ENCODE measurements at regions of chr12 and their contacts with region 1.

Region 1: GRCh38 chr12:92570056-92570753 is 132.6 kb upstream of the PLEKHG7 start:
- DNase-seq: peak; percentile 79
- H3K4me3 ChIP-seq: no peak overlapping the region
- H3K27ac ChIP-seq: no peak overlapping the region
- H3K4me1 ChIP-seq: no peaks in the 10 kb centered on the region
- H3K27me3 ChIP-seq: no peaks in the 10 kb centered on the region
- CTCF ChIP-seq: peak; percentile 69 to 87 (median 86)
- POLR2A ChIP-seq: no peak

Region 2: DNA sequence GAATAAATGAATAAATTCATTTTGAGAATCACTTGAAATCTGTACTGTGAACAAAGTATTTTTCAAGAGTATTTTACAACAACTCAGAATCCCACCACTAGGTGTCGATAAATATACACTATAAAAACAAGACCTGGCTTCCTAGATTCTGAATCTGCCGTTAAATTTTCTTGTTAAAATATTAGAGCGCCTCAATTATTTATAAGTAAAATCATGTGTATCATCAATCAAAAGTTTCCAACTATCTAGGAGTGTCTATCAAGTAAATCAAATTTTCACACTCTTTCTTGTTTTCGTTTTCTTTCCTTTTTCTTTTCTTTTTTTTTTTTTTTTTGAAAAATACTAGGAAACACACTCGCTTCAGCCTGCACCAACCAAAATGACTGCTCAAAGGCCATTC is 1208.3 kb before region 1 on chr12:
- intact Hi-C with region 1: loop called (anchors 5 kb)
- DNase-seq: no peak
- H3K4me3 ChIP-seq: no peak overlapping the region
- H3K27ac ChIP-seq: no peak overlapping the region
- H3K4me1 ChIP-seq: no peaks in the 10 kb centered on the region
- H3K27me3 ChIP-seq: no peaks in the 10 kb centered on the region
- CTCF ChIP-seq: peak; percentile 68 to 84 (median 78)
- POLR2A ChIP-seq: no peak

Region 3: GRCh38 chr12:91382081-91382543 is 1188.1 kb before region 1 on chr12:
- intact Hi-C with region 1: loop called (anchors 2 kb)
- DNase-seq: peak; percentile 82
- H3K4me3 ChIP-seq: peak overlapping the region; percentile 5 to 29
- H3K27ac ChIP-seq: peak overlapping the region; percentile 56 to 74
- H3K4me1 ChIP-seq: no peaks in the 10 kb centered on the region
- H3K27me3 ChIP-seq: no peaks in the 10 kb centered on the region
- CTCF ChIP-seq: peak; percentile 85 to 89 (median 87)
- POLR2A ChIP-seq: peak; percentile 12

Region 4: GRCh38 chr12:91577586-91578539 is 992.3 kb before region 1 on chr12:
- intact Hi-C with region 1: loop called (anchors 5 kb)
- DNase-seq: no peak
- H3K4me3 ChIP-seq: no peak overlapping the region
- H3K27ac ChIP-seq: no peak overlapping the region
- H3K4me1 ChIP-seq: no peaks in the 10 kb centered on the region
- H3K27me3 ChIP-seq: no peaks in the 10 kb centered on the region
- CTCF ChIP-seq: peak; percentile 28 to 74 (median 66)
- POLR2A ChIP-seq: no peak

Region 5: GRCh38 chr12:91811481-91812287 is 758.5 kb before region 1 on chr12:
- intact Hi-C with region 1: loop called (anchors 5 kb)
- DNase-seq: peak; percentile 50
- H3K4me3 ChIP-seq: no peak overlapping the region
- H3K27ac ChIP-seq: no peak overlapping the region
- H3K4me1 ChIP-seq: no peaks in the 10 kb centered on the region
- H3K27me3 ChIP-seq: no peaks in the 10 kb centered on the region
- CTCF ChIP-seq: peak; percentile 62 to 83 (median 72)
- POLR2A ChIP-seq: no peak

Region 6: DNA sequence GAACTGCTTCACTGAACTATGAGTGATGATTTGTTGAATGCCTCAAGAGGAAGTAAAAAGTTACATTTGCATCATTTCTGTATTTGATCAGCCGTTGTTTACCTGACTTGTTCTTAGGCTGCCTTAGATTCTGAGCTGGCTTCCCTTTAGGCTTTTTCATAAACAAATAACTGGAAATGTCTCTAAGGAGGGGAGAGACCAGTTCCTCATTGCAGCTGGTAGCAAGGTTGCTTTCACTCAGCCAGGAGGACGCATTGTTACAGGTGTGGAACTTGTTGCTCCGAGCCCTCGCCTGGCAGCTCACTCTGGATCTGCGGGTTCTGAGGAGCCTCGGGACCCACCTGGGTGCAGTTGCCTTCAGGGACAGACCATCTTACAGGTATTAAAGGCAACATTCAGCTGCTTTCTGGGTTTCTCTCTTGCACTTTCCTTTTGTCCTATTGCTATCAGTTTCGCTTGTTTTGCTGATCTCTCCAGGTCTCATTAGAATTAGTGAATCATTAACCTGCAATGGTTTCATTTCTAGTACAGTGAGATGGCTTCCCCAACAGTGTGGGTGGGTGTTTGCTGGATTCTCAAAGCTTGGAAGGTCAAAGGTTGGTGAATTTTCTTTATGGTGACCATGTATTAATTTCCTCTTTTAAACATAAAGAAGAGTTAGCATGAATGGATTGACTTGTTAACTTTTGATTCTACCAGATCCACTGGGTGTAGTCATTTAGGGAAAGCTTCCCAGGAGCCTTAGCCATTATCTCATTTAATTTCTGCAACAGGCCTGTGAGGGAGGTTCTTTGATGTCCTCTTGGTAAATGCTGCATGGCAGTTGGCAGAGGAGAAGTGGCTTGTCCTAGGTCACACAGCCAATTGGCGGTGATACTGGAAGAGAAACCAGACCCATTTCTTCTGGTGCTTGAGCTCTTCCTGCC is 132.8 kb after region 1 on chr12 and contains the start of gene PLEKHG7:
- intact Hi-C with region 1: no loop called
- DNase-seq: no peak
- H3K4me3 ChIP-seq: no peak within 1 kb of the TSS
- H3K27ac ChIP-seq: no peak within 1 kb of the TSS
- H3K4me1 ChIP-seq: no peaks in the 10 kb centered on the region
- H3K27me3 ChIP-seq: no peaks in the 10 kb centered on the region
- CTCF ChIP-seq: no peak
- POLR2A ChIP-seq: no peak
- total RNA-seq, gene PLEKHG7: 0.50 to 1.4 TPM

Measured in prostate gland (tissue), 2 donors.